Activated CD4-positive, alpha-beta memory T cell treated with anti-CD3 and anti-CD28 coated beads, Interleukin-2, amount 10 ng/mL, durations not matched to agents 7 days and 5 days (primary cell): ENCODE measurements at regions of chrX and their contacts with region 1.

Region 1: GRCh38 chrX:46376246-46376885 is 168.9 kb downstream of the ZNF674 start:
- DNase-seq: peak; percentile 22
- H3K4me3 Mint-ChIP-seq: no peak overlapping the region
- H3K27ac Mint-ChIP-seq: no peak overlapping the region
- H3K4me1 Mint-ChIP-seq: peaks cover 4% of the 10 kb centered on the region
- H3K27me3 Mint-ChIP-seq: peaks cover 1% of the 10 kb centered on the region

Region 2: DNA sequence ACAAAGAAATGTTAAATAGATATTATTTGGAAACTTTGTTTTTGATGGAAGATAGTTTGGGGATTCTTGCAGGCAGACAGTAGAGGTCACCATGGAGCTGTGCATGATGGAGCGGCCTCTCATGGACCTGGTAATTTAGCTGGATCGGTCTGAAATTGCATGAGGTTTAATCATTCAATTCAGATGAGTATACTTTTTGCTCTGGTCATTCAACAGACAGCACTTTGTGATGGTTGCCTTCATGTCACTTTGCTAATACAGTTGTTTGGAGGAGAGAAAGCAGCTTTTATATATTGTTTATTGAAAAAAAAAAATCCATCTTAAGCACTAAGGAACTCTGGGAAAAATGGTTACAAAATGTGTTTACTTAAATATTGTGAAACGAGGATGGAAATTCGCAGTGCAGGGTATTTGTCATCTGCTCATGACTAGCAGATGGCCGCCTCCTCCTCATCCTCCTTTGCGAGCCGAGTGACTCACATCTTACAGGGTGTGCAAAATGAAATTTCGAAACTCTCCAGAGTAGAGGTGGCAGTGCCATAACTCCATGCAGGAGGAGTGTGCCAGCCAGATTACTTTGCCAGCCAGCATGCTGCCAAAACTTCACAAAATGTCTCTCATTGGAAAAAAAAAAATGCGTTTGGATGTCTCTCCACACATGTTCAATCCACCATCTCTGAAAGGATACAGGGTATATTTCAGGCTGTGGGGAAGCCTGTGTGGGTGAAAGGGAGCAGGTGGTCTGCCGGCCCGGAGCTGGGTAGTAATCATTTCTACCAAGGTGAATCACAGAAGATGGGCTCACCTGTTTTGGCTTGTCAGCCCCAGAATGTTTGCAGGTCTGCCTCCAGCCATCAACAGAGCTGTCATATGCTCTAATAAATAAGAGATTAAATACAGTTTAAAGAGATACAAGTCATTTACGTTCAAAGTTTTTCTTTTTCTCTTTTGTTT is 860.8 kb before region 1 on chrX:
- CTCF ChIA-PET with region 1: interaction called, 12 read pairs
- POLR2A ChIA-PET with region 1: no interaction called
- DNase-seq: peak; percentile 46
- H3K4me3 Mint-ChIP-seq: no peak overlapping the region
- H3K27ac Mint-ChIP-seq: no peak overlapping the region
- H3K4me1 Mint-ChIP-seq: peaks cover 8% of the 10 kb centered on the region
- H3K27me3 Mint-ChIP-seq: no peaks in the 10 kb centered on the region

Region 3: DNA sequence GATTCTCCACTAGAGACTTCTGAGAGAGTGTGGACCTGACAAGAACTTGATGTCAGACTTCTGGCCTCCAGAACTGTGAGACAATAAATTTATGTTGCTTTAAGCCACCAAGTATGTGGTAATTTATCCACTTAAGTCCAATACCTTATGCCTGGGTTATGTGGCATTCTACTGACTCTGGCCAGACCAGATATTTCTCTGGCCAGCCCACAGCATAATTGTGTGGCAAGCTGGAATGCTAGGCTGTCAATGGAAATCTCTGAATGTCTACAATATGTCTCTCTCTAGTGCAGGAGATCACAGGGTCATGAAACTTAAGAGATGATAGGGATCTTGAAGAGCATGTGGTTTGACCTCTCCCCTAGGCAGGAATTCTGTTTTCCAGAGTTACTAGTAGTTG is 82.1 kb before region 1 on chrX:
- CTCF ChIA-PET with region 1: no interaction called
- POLR2A ChIA-PET with region 1: no interaction called
- DNase-seq: no peak
- H3K4me3 Mint-ChIP-seq: no peak overlapping the region
- H3K27ac Mint-ChIP-seq: no peak overlapping the region
- H3K4me1 Mint-ChIP-seq: no peaks in the 10 kb centered on the region
- H3K27me3 Mint-ChIP-seq: no peaks in the 10 kb centered on the region